Naive thymus-derived CD4-positive, alpha-beta T cell (primary cell): ENCODE measurements at regions of chr12 and their contacts with region 1.

Region 1: DNA sequence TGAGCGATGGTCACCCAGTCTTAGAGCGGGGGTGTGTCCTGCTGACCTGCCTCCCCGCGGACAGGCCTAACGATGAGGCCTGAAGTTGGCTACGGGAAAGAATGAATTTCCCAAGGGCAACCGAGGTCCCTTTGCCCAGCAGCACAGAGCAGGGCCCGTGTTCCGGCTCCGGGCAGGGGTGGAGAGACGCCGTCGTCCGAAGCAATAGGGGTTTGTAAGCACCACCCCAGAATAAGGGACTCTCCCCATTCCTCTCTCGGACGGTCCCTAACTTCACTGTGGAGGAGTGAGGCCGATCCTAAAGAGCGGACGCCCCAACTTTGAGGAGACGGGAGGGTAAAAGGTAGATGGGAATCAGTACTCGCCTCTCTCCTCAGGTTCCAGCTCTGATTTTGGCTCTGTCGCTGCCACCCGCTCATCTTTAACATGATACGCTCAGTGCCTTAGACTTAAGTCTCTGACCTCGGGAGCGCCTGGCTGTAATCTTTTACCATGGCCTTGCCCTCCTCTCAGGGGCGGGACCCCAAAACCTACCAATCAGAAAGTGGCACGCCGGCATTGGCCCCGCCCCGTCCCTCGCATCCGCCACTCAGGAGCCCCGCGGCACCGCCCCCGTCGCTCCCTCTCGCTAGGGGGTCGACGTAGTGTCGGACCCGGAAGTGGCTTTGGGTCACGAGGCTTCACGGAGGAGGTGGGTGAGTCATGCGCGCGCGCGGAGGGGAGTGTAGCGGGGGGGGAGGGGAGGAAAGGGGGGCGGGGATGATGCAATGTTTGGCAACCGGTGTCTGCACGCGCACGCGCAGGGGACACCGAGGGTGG is at the start of gene DDIT3:
- DNase-seq: peak; percentile 98 to 99 (median 99)
- ATAC-seq: peak; percentile 89
- H3K4me3 ChIP-seq: peak within 1 kb of the TSS; percentile 100
- H3K4me3 Mint-ChIP-seq: peak within 1 kb of the TSS; percentile 89 to 99 (median 98)
- H3K27ac ChIP-seq: peak within 1 kb of the TSS; percentile 95
- H3K27ac Mint-ChIP-seq: peak within 1 kb of the TSS; percentile 97 to 100 (median 99)
- H3K4me1 ChIP-seq: peaks cover 32 to 41% of the 10 kb centered on the region in 2 donors
- H3K4me1 Mint-ChIP-seq: peaks cover 47 to 80% (median 56%) of the 10 kb centered on the region in 7 donors
- H3K27me3 ChIP-seq: no peaks in the 10 kb centered on the region
- H3K27me3 Mint-ChIP-seq: peaks cover 0 to 7% (median 0%) of the 10 kb centered on the region in 5 donors
- total RNA-seq, gene DDIT3: 19.6 to 124 (median 51.6) TPM

Region 2: GRCh38 chr12:56724972-56725722 is 795.1 kb before region 1 on chr12 and contains the start of gene NACA:
- CTCF ChIA-PET with region 1: no interaction called
- POLR2A ChIA-PET with region 1: no interaction called
- intact Hi-C with region 1: loop called (anchors 1 to 10 kb)
- DNase-seq: peak; percentile 85 to 99 (median 96)
- ATAC-seq: peak; percentile 95
- H3K4me3 ChIP-seq: peak within 1 kb of the TSS; percentile 100
- H3K4me3 Mint-ChIP-seq: peak within 1 kb of the TSS; percentile 94 to 100 (median 97)
- H3K27ac ChIP-seq: peak within 1 kb of the TSS; percentile 87
- H3K27ac Mint-ChIP-seq: peak within 1 kb of the TSS; percentile 94 to 100 (median 98)
- H3K4me1 ChIP-seq: peaks cover 40 to 43% of the 10 kb centered on the region in 2 donors
- H3K4me1 Mint-ChIP-seq: peaks cover 39 to 53% (median 49%) of the 10 kb centered on the region in 7 donors
- H3K27me3 ChIP-seq: no peaks in the 10 kb centered on the region
- H3K27me3 Mint-ChIP-seq: no peaks in the 10 kb centered on the region
- total RNA-seq, gene NACA: 834 to 1,486 (median 1,355) TPM

Region 3: DNA sequence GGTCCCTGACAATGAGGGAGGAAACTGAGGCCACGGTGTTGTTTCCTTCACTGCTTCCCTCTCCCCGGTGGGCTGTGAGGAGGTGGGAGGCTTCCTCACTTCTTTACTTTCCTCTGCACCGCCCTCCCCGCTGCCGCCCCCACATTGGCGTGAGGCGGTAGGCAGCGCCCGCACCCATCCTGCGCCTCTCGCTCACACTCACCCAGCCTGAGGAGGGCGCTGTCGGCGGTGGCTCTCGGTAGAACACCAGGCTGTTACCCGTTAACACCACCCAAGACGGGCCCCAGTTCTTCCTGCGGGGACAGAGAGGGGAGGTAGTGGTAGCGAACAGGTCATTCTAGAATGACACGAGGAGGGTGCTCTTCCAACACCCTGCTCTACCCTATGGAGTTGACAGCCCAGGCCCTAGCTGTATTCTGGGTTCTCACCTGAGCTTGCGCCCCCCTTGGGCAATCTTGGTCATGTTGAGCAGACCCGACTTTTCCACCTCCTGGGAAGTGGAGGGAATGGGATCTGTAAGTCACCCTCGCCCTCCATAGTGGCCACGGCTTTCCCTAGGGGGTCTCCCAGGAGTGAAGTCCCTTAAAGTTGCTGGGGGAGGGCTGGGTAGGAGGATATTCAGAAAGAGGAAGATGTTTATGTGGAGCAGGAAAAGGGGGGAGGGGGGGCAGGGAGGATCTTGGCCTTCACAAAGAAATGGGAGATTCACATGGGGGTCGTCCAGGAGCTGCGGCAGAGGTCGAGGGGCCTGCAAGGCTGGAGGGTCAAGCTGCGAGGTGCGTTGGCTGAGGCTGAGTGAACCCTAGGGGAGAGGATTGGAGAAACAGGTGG is 43.9 kb before region 1 on chr12:
- CTCF ChIA-PET with region 1: interaction called, 4 read pairs
- POLR2A ChIA-PET with region 1: interaction called, 50 read pairs
- intact Hi-C with region 1: loop called (anchors 1 kb)
- DNase-seq: peak; percentile 58 to 85 (median 70)
- ATAC-seq: peak; percentile 53
- H3K4me3 ChIP-seq: peak overlapping the region; percentile 95
- H3K4me3 Mint-ChIP-seq: peak overlapping the region; percentile 84 to 100 (median 98)
- H3K27ac ChIP-seq: peak overlapping the region; percentile 94
- H3K27ac Mint-ChIP-seq: peak overlapping the region; percentile 97 to 100 (median 100)
- H3K4me1 ChIP-seq: peaks cover 59 to 70% of the 10 kb centered on the region in 2 donors
- H3K4me1 Mint-ChIP-seq: peaks cover 66 to 85% (median 76%) of the 10 kb centered on the region in 7 donors
- H3K27me3 ChIP-seq: no peaks in the 10 kb centered on the region
- H3K27me3 Mint-ChIP-seq: no peaks in the 10 kb centered on the region

Region 4: DNA sequence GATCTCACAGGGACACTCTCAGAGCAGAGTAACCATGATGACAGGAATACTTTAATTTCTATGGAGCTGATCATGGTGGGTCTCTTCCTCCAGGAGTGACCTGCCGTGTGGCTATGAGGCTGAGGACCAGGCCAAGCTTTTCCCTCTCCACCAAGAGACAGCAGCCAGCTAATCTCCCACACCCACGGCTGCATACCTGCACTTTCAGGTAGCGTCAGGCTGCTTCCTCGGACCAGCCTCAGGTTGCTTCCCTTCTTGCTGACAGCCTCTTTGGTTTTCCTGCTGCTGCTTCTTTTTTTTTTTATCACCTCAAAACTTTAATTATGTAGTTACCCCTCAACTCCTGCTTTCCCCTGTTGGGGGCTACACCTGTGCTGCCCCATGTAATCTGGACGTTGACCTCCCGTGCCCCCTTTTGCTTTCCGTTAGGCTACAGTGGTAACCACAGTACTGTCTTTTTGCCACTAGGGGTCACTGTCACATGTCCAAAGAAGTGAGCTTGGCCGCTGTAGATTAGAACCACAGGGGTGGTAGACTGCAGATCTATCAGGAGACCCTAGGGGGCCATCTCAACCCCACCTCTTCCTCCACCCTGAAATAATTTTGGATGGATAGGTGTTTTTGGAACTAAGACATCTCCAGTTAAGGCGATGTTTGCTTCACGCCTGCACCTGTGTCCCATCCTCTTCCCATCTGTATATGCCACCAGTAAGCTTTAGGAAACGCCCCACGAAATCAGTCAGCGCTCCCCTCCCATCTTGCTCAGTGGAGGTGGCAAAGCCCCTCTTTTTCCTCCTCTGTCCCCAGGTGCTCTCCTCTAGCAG is 63.0 kb after region 1 on chr12:
- CTCF ChIA-PET with region 1: no interaction called
- POLR2A ChIA-PET with region 1: no interaction called
- intact Hi-C with region 1: loop called in 1 of 2 experiments (anchors 2 kb)
- DNase-seq: peak; percentile 24 to 79 (median 71)
- ATAC-seq: peak; percentile 100
- H3K4me3 ChIP-seq: no peak overlapping the region
- H3K4me3 Mint-ChIP-seq: no peak overlapping the region
- H3K27ac ChIP-seq: no peak overlapping the region
- H3K27ac Mint-ChIP-seq: peak overlapping the region in 1 of 9 donors; percentile 78
- H3K4me1 ChIP-seq: no peaks in the 10 kb centered on the region
- H3K4me1 Mint-ChIP-seq: peaks cover 5 to 15% (median 6%) of the 10 kb centered on the region in 7 donors
- H3K27me3 ChIP-seq: no peaks in the 10 kb centered on the region
- H3K27me3 Mint-ChIP-seq: peaks cover 0 to 18% (median 14%) of the 10 kb centered on the region in 5 donors

Region 5: DNA sequence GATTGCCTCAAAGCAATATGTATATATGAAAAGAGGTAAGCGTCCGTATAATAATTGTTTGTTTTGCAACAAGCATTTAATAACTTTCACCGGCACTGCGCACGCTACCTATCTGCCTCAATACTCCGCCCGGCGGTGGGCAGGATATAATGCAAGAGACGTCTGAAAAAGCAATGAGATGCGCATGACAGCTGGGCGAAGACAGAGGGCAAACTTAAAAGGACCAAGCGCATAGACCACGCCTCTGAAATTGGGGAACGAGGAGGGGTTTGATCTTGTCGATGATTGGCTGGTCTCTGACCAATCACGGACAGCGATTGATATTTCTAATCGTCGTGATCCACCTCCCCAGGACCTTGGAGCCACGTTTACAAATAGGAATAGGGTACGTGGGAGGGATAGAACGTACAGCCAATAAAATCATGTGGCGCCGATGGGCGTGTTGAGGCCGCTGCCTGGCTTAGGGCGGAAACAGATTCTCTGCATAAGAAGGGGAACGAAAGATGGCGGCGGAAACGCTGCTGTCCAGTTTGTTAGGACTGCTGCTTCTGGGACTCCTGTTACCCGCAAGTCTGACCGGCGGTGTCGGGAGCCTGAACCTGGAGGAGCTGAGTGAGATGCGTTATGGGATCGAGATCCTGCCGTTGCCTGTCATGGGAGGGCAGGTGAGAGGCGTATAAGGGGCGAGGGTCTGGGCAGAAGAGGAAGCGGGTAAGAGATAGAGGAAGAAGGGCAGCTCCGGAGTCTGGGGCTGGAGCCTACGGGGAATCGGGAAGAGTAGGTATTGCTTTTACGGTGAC is 173.6 kb after region 1 on chr12 and contains the start of gene OS9:
- CTCF ChIA-PET with region 1: no interaction called
- POLR2A ChIA-PET with region 1: interaction called, 4 read pairs
- intact Hi-C with region 1: loop called (anchors 1 kb)
- DNase-seq: peak; percentile 76 to 99 (median 98)
- ATAC-seq: peak; percentile 96
- H3K4me3 ChIP-seq: peak within 1 kb of the TSS; percentile 92
- H3K4me3 Mint-ChIP-seq: no peak within 1 kb of the TSS
- H3K27ac ChIP-seq: peak within 1 kb of the TSS; percentile 83
- H3K27ac Mint-ChIP-seq: no peak within 1 kb of the TSS
- H3K4me1 ChIP-seq: peaks cover 10 to 23% of the 10 kb centered on the region in 2 donors
- H3K4me1 Mint-ChIP-seq: peaks cover 2 to 14% (median 7%) of the 10 kb centered on the region in 7 donors
- H3K27me3 ChIP-seq: no peaks in the 10 kb centered on the region
- H3K27me3 Mint-ChIP-seq: peaks cover 0 to 18% (median 7%) of the 10 kb centered on the region in 5 donors
- total RNA-seq, gene OS9: 139 to 175 (median 171) TPM